ENCODE measurements at regions of chr6 and their contacts with region 1.

Region 1: DNA sequence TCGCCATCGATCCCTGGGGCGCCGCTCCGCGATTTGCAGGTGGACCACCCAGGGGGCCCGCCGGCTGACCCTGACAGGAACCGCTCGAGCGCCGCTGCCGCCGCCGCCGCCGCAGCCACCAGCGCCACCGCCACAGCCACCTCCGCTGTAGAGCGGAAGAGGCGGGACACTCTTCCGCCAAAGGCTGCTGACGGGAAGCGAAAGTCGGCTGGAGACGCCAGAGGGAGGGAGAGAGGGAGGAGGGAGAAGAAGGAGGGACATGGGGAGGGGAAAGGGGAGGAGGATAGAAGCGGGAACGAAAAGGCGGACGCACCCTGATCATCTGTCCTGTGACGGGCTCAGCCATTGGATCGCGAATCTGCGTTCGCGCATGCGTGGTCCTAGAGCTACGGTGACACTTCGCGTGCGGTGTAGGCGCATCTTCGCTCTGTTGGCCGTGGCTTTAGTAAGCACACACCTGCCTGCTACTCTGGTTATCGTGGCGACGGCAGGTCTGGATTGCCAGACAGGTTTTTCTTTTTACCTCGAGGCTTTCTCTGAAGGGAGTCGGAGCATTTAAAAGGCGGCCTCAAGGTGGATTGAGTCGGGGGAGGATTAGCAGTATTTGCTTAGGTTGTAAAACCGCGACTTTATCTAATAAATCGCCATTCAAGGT is at the start of gene TMEM30A:
- DNase-seq: peak; percentile 87 to 100
- ATAC-seq: peak; percentile 86 to 97 (median 89)
- H3K4me3 ChIP-seq: peak within 1 kb of the TSS; percentile 94
- H3K4me3 Mint-ChIP-seq: no peak within 1 kb of the TSS
- H3K27ac ChIP-seq: peak within 1 kb of the TSS; percentile 89
- H3K27ac Mint-ChIP-seq: no peak within 1 kb of the TSS
- H3K4me1 ChIP-seq: peaks cover 9% of the 10 kb centered on the region
- H3K4me1 Mint-ChIP-seq: peaks cover 22 to 24% of the 10 kb centered on the region in 2 donors
- H3K27me3 ChIP-seq: no peaks in the 10 kb centered on the region
- H3K27me3 Mint-ChIP-seq: no peaks in the 10 kb centered on the region
- CTCF ChIP-seq: no peak
- total RNA-seq, gene TMEM30A: 43.8 to 72.0 (median 60.7) TPM

Region 2: DNA sequence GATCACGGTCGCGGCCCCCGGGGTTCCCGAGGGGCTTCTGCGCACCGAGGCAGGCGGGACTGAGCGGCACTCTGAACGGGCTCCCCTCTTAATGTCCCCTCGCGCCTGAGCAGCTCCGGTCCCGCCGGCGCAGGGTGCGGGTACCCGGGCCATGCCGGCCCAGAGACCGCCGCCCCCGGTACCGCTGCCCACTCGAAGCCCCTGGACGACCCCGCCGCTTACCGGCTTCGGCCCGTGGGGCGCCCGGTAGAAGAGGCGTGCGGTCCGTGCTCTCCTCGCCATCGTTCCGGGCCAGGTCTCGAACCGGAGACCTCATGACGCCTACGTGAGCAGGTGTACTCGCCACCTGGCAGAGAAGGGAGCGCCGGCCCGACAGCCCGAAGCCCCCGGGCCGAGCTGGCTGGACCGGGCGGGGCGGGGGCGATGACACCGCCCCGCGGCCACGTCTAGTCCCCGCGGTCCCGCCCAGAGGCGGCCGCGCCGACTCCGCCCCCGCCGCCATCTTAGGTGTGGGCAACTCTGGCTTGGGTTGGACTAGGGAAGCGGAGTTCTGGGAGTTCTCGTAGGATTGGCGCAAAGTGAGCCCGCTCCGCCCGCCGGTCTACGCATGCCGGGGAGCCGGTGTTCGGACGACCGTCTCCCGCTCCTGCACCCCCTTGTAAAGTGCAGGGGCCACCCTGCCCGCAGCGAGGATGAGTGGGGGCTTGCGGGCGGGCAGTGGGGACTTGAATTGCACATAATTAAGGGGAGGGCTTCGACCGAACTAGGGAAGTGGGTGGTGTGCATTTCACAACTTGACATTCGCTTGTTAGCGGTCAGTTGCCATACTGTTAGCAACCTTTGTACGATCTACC is 1631.0 kb before region 1 on chr6 and contains the start of gene SLC17A5:
- intact Hi-C with region 1: loop called (anchors 2 kb)
- DNase-seq: peak; percentile 84 to 93
- ATAC-seq: peak; percentile 84 to 95 (median 86)
- H3K4me3 ChIP-seq: peak within 1 kb of the TSS; percentile 81
- H3K4me3 Mint-ChIP-seq: peak within 1 kb of the TSS; percentile 96
- H3K27ac ChIP-seq: peak within 1 kb of the TSS; percentile 95
- H3K27ac Mint-ChIP-seq: peak within 1 kb of the TSS; percentile 94 to 98
- H3K4me1 ChIP-seq: peaks cover 16% of the 10 kb centered on the region
- H3K4me1 Mint-ChIP-seq: peaks cover 47 to 50% of the 10 kb centered on the region in 2 donors
- H3K27me3 ChIP-seq: no peaks in the 10 kb centered on the region
- H3K27me3 Mint-ChIP-seq: no peaks in the 10 kb centered on the region
- CTCF ChIP-seq: no peak
- total RNA-seq, gene SLC17A5: 8.5 to 13.8 (median 9.1) TPM

Region 3: GRCh38 chr6:75243333-75244062 is 41.3 kb before region 1 on chr6 and contains the start of gene COX7A2:
- intact Hi-C with region 1: loop called (anchors 1 kb)
- DNase-seq: peak; percentile 81 to 94
- ATAC-seq: peak; percentile 95 to 98 (median 97)
- H3K4me3 ChIP-seq: peak within 1 kb of the TSS; percentile 78
- H3K4me3 Mint-ChIP-seq: peak within 1 kb of the TSS; percentile 99
- H3K27ac ChIP-seq: peak within 1 kb of the TSS; percentile 86
- H3K27ac Mint-ChIP-seq: peak within 1 kb of the TSS; percentile 97 to 98
- H3K4me1 ChIP-seq: peaks cover 18% of the 10 kb centered on the region
- H3K4me1 Mint-ChIP-seq: peaks cover 14 to 27% of the 10 kb centered on the region in 2 donors
- H3K27me3 ChIP-seq: no peaks in the 10 kb centered on the region
- H3K27me3 Mint-ChIP-seq: peaks cover 15 to 18% of the 10 kb centered on the region in 2 donors
- CTCF ChIP-seq: no peak
- total RNA-seq, gene COX7A2: 161 to 215 (median 166) TPM

Region 4: DNA sequence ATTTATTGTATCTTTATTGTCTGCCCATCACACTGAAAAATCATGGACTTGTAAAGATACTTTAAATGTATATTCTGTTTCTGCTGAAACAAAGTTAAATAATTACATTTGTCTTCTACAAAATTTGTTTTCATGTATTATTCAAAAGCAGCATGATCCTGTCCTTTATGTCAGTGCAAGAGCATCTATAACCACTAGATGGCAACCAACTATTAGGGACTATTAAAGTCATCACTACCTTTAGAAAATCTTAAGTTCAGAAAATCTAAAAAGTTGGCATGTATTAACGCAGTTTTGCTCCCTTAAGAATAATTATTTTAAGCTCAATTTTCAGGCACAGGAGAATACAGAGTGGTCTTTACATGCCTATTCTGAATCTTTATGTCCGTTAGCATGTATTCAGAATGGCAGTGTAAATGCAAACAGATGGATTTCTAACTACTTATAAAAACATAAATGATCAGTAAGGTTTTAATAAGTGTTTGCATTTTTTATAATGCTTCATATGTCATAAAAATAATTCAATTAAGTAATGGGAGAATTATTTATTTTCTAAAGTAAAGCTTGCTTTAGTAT is 18.0 kb before region 1 on chr6:
- intact Hi-C with region 1: loop called (anchors 2 kb)
- DNase-seq: peak in 1 of 2 donors; percentile 68
- ATAC-seq: peak; percentile 61 to 77 (median 76)
- H3K4me3 ChIP-seq: no peak overlapping the region
- H3K4me3 Mint-ChIP-seq: no peak overlapping the region
- H3K27ac ChIP-seq: no peak overlapping the region
- H3K27ac Mint-ChIP-seq: no peak overlapping the region
- H3K4me1 ChIP-seq: no peaks in the 10 kb centered on the region
- H3K4me1 Mint-ChIP-seq: peaks cover 27 to 36% of the 10 kb centered on the region in 2 donors
- H3K27me3 ChIP-seq: no peaks in the 10 kb centered on the region
- H3K27me3 Mint-ChIP-seq: no peaks in the 10 kb centered on the region
- CTCF ChIP-seq: peak; percentile 88

Region 5: GRCh38 chr6:75418233-75418632 is 133.5 kb after region 1 on chr6:
- intact Hi-C with region 1: no loop called
- DNase-seq: no peak
- ATAC-seq: no peak
- H3K4me3 ChIP-seq: no peak overlapping the region
- H3K4me3 Mint-ChIP-seq: no peak overlapping the region
- H3K27ac ChIP-seq: no peak overlapping the region
- H3K27ac Mint-ChIP-seq: no peak overlapping the region
- H3K4me1 ChIP-seq: no peaks in the 10 kb centered on the region
- H3K4me1 Mint-ChIP-seq: no peaks in the 10 kb centered on the region
- H3K27me3 ChIP-seq: no peaks in the 10 kb centered on the region
- H3K27me3 Mint-ChIP-seq: peaks cover 3 to 9% of the 10 kb centered on the region in 2 donors
- CTCF ChIP-seq: no peak

Region 6: DNA sequence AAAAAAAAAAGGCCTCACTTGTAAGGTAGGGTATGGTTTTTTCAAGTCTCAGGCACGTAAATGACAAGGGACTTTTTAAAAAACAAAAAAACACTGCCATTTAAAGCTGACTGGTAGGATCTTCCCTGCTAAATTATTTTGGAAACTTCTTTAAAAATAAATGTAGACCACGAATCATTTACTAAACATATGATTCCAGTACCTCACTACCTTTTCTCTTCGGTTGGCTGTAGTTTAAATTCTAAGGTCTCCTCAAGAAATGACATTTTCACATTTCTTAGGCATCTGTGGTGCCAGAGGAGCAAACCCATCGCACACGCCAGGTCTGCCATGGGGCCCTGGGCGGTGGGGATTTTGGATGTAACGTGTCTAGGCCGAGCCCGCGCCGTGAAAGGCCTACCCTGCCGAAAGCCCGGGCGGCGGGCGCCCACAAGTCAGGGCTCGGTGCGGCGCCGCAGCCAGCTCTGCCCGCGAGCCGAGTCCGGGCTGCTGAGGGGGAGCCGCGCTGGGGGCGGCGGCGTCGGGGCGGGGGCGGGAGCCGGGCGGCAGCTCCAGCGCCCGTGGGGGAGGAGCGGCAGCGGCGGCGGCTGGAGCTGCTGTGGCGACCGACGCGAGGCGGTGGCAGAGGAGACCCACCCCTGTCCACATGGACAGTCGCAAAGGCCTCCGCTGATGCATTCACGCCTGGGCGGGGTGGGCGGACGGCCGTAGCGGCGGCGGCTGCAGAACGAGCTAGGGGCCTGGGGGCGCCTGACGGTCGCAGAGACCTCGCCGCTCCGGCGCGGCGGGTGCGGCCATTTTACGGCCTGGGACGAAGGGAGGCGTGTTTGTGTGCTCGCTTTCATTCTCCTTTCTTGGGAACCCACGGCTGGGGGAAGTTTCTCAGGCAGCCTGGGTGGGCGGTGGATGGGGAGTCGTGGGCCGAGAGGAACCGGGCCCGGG is 316.8 kb after region 1 on chr6 and contains the start of gene SENP6:
- intact Hi-C with region 1: loop called (anchors 2 kb)
- DNase-seq: peak; percentile 71 to 87
- ATAC-seq: peak; percentile 77 to 86 (median 81)
- H3K4me3 ChIP-seq: peak within 1 kb of the TSS; percentile 91
- H3K4me3 Mint-ChIP-seq: peak within 1 kb of the TSS; percentile 95
- H3K27ac ChIP-seq: peak within 1 kb of the TSS; percentile 98
- H3K27ac Mint-ChIP-seq: peak within 1 kb of the TSS; percentile 94 to 97
- H3K4me1 ChIP-seq: peaks cover 11% of the 10 kb centered on the region
- H3K4me1 Mint-ChIP-seq: peaks cover 31 to 52% of the 10 kb centered on the region in 2 donors
- H3K27me3 ChIP-seq: no peaks in the 10 kb centered on the region
- H3K27me3 Mint-ChIP-seq: no peaks in the 10 kb centered on the region
- CTCF ChIP-seq: no peak
- total RNA-seq, gene SENP6: 102 to 117 (median 108) TPM